Head of caudate nucleus (tissue), 42 donors: ENCODE measurements at regions of chr1 and their contacts with region 1.

Region 1: GRCh38 chr1:87131809-87132283 is 196.8 kb upstream of the LMO4 start:
- DNase-seq: peak; percentile 65 to 94 (median 86)

Region 2: DNA sequence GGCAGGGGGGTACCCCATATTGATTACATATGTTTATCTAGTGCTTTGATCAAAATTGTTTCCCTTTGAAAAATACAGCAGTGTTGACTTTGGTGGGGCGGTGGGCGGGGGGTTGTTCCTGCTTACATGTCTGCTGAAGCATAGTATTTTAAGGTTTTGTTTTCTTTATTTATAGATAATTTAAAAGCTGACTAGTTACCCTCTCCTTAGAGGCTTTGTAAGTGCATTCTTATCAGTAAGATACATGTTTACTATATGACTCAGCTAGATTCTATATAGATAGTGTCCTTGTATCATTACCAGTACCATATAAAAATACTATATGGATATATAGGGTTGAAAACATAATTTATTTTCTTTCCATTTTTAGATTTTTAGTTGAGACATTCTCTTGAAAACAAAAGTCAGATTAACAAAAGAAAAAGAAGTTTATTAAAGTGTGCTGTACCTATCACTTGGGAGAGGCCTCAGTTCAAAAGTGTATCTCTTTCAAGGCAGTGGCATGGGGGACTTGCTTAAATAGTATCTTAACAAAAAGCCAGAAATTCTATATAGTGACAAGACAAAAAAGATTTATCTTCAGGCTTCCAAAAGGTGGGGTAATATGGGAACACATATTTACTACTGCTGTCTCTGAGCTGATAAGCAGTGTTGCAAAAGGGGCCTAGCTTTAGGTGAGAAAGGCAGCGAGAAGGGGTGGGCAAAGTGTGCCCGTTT is 138.4 kb before region 1 on chr1:
- intact Hi-C with region 1: no loop called
- DNase-seq: no peak

Region 3: GRCh38 chr1:87335175-87335884 is 203.5 kb after region 1 on chr1:
- intact Hi-C with region 1: loop called (anchors 10 kb)
- DNase-seq: peak; percentile 12 to 84 (median 68)

Region 4: GRCh38 chr1:87953732-87954344 is 822.0 kb after region 1 on chr1:
- intact Hi-C with region 1: loop called (anchors 5 kb)
- DNase-seq: peak; percentile 29 to 88 (median 66)

Region 5: DNA sequence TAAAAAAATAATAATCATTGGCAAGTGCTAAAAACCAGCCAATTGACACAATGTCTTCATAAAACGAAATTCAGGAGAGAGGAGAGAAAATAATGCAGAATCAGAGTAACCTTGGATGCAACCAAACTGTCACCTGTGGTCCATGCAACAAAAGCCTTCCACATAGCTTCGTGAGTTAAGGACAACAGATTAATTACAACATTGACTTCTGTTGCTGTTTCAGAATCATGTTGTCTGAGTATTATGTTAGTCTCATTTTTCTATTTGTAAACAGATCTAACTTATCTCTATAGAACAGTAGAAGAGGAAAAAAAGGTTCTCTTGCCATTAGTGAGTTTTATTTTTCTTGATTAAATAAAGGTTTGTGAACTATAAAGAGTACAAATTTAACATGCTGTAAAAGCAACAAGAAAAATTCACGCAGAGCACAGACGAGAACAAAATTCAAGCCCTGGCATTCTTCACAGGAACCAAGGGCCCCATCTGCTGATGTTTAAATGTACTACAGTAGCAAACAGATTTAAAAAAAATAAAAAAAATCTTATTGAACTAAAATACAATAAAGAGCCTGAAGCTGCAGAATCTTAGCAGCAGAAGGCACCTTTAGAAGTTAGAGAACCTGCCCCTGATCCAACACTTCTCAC is 1171.1 kb after region 1 on chr1:
- intact Hi-C with region 1: loop called (anchors 10 kb)
- DNase-seq: peak in 32 of 42 donors; percentile 2 to 80 (median 42)